ENCODE measurements at regions of chr9 and their contacts with region 1.

Region 1: DNA sequence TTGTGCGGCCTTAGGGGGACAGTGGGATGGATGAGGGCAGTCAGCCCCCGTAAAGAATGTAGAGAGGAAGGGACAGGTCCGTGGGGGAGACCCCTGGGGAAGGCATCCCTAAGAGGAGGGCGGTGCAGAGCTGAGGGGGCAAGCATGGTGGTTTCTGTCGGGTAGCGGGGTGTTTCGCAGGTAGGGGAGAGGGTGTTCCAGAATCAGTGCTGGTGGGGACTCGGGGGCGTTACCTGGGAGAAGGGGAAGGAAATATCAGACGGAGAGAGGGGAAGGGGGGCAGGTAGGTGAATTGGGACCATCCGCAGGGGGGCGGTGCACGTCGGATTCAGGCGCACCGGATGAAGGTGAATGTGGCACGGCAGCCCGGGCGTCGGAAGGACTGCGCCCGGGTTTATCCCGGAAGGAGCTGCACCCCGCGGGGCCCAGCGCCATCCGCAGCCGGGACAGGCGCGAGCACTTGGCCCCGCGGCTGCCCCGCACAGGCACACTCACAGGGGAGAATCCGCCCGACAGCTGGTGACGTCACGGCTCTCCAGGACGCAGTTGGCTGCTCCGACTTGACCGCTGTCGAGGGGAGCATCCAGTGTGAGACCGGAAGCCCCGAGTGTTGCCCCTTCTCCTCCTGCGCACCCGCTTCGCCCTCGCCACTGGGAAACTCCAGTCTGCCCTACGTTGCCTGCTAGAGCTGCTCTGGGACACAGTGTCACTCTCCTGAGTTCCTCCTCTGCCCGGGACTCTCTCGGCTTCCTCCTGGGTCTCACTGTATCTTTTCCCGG is 1.3 kb downstream of the CD72 start:
- DNase-seq: peak; percentile 88
- ATAC-seq: peak; percentile 72
- H3K4me3 Mint-ChIP-seq: peak overlapping the region; percentile 78
- H3K27ac Mint-ChIP-seq: peak overlapping the region; percentile 80
- H3K4me1 Mint-ChIP-seq: peaks cover 51% of the 10 kb centered on the region
- H3K27me3 Mint-ChIP-seq: no peaks in the 10 kb centered on the region

Region 2: GRCh38 chr9:35636135-35636876 is 19.4 kb after region 1 on chr9:
- CTCF ChIA-PET with region 1: interaction called, 18 read pairs
- DNase-seq: no peak
- ATAC-seq: no peak
- H3K4me3 Mint-ChIP-seq: no peak overlapping the region
- H3K27ac Mint-ChIP-seq: no peak overlapping the region
- H3K4me1 Mint-ChIP-seq: peaks cover 48% of the 10 kb centered on the region
- H3K27me3 Mint-ChIP-seq: no peaks in the 10 kb centered on the region

Region 3: GRCh38 chr9:35657546-35658136 is 40.8 kb after region 1 on chr9 and contains the start of gene RMRP:
- CTCF ChIA-PET with region 1: interaction called, 96 read pairs
- DNase-seq: peak; percentile 95
- ATAC-seq: peak; percentile 92
- H3K4me3 Mint-ChIP-seq: peak within 1 kb of the TSS; percentile 84
- H3K27ac Mint-ChIP-seq: peak within 1 kb of the TSS; percentile 95
- H3K4me1 Mint-ChIP-seq: peaks cover 61% of the 10 kb centered on the region
- H3K27me3 Mint-ChIP-seq: peaks cover 4% of the 10 kb centered on the region
- total RNA-seq, gene RMRP: 6,751 to 13,083 TPM

Region 4: GRCh38 chr9:35664531-35665470 is 47.9 kb after region 1 on chr9 and contains the start of gene ARHGEF39:
- CTCF ChIA-PET with region 1: interaction called, 96 read pairs
- DNase-seq: peak; percentile 87
- ATAC-seq: peak; percentile 89
- H3K4me3 Mint-ChIP-seq: peak within 1 kb of the TSS; percentile 87
- H3K27ac Mint-ChIP-seq: peak within 1 kb of the TSS; percentile 81
- H3K4me1 Mint-ChIP-seq: peaks cover 61% of the 10 kb centered on the region
- H3K27me3 Mint-ChIP-seq: no peaks in the 10 kb centered on the region
- total RNA-seq, gene ARHGEF39: 14.5 to 21.1 TPM

Measured in activated CD8-positive, alpha-beta memory T cell treated with anti-CD3 and anti-CD28 coated beads, Interleukin-2, amount 10 ng/mL, durations not matched to agents 7 days and 5 days (primary cell).